AG04450 (cell line): ENCODE measurements at regions of chrX and their contacts with region 1.

Region 1: DNA sequence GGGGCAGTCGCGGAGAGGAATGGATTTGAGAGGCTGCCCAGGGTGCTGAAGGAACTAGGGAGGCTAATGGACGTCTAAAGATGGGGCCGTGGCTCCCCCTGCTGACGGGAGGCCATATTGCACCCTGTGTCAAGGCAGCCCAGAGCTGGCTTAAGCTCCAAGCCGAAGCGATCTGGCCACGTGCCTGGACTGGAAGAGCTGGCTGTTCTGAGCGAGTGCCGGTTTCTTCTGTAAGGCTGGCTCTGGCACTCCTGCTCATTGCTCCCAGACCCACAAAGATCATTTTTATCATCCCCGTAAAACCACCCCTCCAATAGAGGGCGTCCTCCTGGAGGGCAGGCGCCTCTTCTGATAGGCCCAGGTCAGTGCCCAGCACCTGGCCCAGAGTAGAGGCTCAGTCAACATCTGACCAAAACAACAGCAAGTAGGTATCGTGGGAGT is 5.6 kb downstream of the PNCK start:
- DNase-seq: peak; percentile 30
- H3K4me3 ChIP-seq: peak overlapping the region; percentile 20; the same call in 1 of the 2 replicates
- H3K27ac ChIP-seq: no peak overlapping the region
- H3K27me3 ChIP-seq: peaks cover 11% of the 10 kb centered on the region
- CTCF ChIP-seq: peak; percentile 72

Region 2: GRCh38 chrX:153527208-153527607 is 140.8 kb before region 1 on chrX:
- CTCF ChIA-PET with region 1: no interaction called
- POLR2A ChIA-PET with region 1: no interaction called
- DNase-seq: no peak
- H3K4me3 ChIP-seq: no peak overlapping the region
- H3K27ac ChIP-seq: no peak overlapping the region
- H3K27me3 ChIP-seq: peaks cover 7% of the 10 kb centered on the region
- CTCF ChIP-seq: no peak

Region 3: GRCh38 chrX:153539171-153539978 is 128.6 kb before region 1 on chrX:
- CTCF ChIA-PET with region 1: interaction called, 64 read pairs
- POLR2A ChIA-PET with region 1: no interaction called
- DNase-seq: no peak
- H3K4me3 ChIP-seq: no peak overlapping the region
- H3K27ac ChIP-seq: no peak overlapping the region
- H3K27me3 ChIP-seq: no peaks in the 10 kb centered on the region
- CTCF ChIP-seq: peak; percentile 83

Region 4: GRCh38 chrX:153599192-153600031 is 68.6 kb before region 1 on chrX:
- CTCF ChIA-PET with region 1: interaction called, 15 read pairs
- POLR2A ChIA-PET with region 1: no interaction called
- DNase-seq: peak; percentile 43
- H3K4me3 ChIP-seq: peak overlapping the region; percentile 64
- H3K27ac ChIP-seq: no peak overlapping the region
- H3K27me3 ChIP-seq: no peaks in the 10 kb centered on the region
- CTCF ChIP-seq: no peak

Region 5: DNA sequence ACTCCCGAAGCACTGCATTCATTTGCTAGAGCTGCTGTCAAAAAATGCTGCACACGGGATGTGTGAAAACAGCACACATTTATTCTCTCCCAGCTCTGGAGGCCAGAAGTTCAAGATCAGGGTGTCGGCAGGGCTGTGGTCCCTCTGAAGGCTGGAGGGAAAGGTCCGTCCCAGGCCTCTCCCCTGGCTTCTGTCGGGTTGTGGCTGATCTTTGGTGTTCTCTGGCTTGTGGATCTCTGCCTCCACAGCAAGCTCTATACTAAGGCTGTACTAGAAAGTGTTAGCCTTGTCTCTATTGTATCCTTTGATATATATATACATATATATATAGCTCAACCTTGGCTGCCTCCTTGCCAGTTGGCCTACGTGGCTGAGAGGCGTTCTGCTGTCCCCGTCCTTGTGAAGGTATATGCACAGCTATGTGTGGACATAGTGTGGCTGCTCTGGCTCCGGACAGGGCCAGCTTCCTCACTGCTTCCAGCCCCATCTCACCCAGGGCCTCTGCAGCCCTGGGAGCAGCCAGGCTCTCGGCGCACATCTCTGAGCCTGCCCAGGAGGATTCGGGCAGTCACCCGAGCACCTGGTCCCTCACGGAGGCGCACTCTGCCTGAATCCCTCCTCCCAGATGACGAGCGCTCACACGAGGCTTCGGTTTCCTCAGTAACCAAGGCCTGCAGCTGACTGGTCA is 35.9 kb before region 1 on chrX:
- CTCF ChIA-PET with region 1: interaction called, 14 read pairs
- POLR2A ChIA-PET with region 1: no interaction called
- DNase-seq: no peak
- H3K4me3 ChIP-seq: no peak overlapping the region
- H3K27ac ChIP-seq: no peak overlapping the region
- H3K27me3 ChIP-seq: peaks cover 8% of the 10 kb centered on the region
- CTCF ChIP-seq: no peak

Region 6: GRCh38 chrX:153657161-153657560 is 10.8 kb before region 1 on chrX:
- CTCF ChIA-PET with region 1: interaction called, 23 read pairs
- POLR2A ChIA-PET with region 1: no interaction called
- DNase-seq: no peak
- H3K4me3 ChIP-seq: no peak overlapping the region
- H3K27ac ChIP-seq: no peak overlapping the region
- H3K27me3 ChIP-seq: peaks cover 9% of the 10 kb centered on the region
- CTCF ChIP-seq: no peak

Region 7: GRCh38 chrX:153967536-153968224 is 299.7 kb after region 1 on chrX:
- CTCF ChIA-PET with region 1: no interaction called
- POLR2A ChIA-PET with region 1: no interaction called
- DNase-seq: no peak
- H3K4me3 ChIP-seq: no peak overlapping the region; the same call in 1 of the 2 replicates
- H3K27ac ChIP-seq: no peak overlapping the region
- H3K27me3 ChIP-seq: no peaks in the 10 kb centered on the region
- CTCF ChIP-seq: no peak

Region 8: DNA sequence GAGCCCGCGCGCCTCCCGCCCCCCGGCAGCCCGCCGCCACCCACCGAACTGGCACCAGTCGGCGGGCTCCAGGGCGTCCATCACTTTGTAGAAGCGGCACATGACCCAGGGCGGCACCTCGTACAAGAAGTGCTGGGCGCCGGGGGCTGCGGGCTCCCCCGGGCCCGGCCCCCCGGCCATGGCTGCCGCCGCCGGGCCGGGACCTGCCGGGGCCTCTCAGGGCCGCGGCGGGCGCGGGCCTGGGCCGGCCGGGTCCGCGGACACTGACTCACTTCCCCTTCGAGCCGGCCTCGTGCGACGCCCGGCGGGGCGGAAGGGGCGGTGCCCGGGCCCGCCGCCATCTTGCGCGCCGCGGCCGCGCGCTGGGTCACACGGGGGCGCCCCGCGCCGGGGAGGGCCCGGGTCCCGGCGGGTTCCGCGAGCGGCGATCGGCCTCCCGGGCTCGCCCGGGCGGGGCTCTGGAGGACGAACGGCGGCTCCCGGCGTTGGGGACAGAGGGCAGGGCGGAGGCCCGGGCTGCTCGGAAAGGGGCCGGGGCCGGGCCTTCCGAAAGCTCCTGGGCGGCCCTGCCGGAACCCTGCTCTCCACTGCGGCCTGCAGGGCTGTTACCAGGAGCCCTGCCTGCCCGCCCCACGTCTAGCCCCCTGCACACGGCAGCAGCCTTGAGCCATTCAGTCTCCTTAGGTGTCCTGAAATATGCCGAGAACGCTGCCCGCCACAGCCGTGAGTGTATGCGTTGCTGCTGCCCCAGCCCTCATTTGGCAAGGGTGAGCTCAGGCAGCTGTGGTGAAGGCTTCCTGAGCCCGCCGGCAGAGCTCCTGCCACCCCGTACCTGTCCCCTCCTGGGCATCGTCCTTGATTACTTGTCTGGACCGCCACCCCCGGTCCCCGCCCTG is 351.9 kb after region 1 on chrX and contains the start of gene IRAK1:
- CTCF ChIA-PET with region 1: no interaction called
- POLR2A ChIA-PET with region 1: no interaction called
- DNase-seq: no peak
- H3K4me3 ChIP-seq: peak within 1 kb of the TSS; percentile 63
- H3K27ac ChIP-seq: peak within 1 kb of the TSS; percentile 65
- H3K27me3 ChIP-seq: no peaks in the 10 kb centered on the region
- CTCF ChIP-seq: no peak
- polyA plus RNA-seq, gene IRAK1: 31.6 and 36.7 TPM in 2 replicates